Heart right ventricle (tissue), 16 donors: ENCODE measurements at regions of chr11 and their contacts with region 1.

Region 1: GRCh38 chr11:67507864-67508485 is at the start of gene CDK2AP2:
- DNase-seq: peak; percentile 100
- ATAC-seq: peak; percentile 76 to 90 (median 84)
- H3K4me3 ChIP-seq: peak within 1 kb of the TSS; percentile 50 to 97 (median 78)
- H3K27ac ChIP-seq: peak within 1 kb of the TSS; percentile 96 to 100 (median 98)
- H3K4me1 ChIP-seq: peaks cover 17 to 47% (median 41%) of the 10 kb centered on the region in 9 donors
- H3K27me3 ChIP-seq: peaks cover 0 to 7% (median 0%) of the 10 kb centered on the region in 7 donors
- CTCF ChIP-seq: no peak
- total RNA-seq, gene CDK2AP2: 29.3 to 94.1 (median 53.4) TPM

Region 2: DNA sequence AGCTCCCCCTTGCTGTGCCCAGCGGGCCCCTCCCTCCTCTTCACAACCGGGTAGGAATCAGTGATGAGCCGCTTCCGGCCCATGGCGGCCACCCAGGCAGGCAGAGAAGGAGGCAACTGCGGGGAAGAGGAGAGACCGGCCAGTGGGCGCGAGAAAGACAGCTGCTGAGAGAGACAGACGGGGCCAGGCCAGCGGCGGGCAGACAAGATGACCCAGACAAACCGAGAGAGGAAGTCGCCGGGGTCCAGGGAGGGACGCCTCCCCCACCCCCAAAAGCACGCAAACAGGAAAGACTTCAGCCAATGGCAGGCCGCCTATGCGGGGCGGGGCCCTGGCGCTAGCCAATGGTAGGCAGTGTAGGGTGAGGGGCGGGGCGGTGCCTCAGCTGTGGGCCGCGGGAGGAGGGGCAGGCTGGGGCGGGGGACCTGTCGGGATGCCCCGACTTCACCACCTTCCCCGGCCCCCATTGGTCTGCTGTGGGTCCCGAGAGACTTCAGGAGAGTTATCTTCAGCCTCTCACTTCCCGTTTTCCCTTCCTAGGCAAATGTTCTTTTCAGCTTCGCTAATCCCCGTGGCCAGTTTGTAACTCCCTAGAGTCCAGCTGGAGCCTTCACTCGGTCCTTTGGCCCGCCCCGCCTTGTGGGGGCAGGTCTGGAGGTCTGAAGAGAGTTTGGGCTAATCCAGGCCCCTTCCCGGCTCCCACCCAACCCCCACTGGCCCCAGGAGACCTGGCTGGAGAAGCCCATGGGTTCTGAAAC is 154.5 kb before region 1 on chr11 and contains the start of gene POLD4:
- intact Hi-C with region 1: loop called in 4 of 10 experiments (anchors 2 to 5 kb)
- DNase-seq: peak; percentile 98 to 99
- ATAC-seq: peak; percentile 88 to 96 (median 94)
- H3K4me3 ChIP-seq: peak within 1 kb of the TSS; percentile 62 to 97 (median 74)
- H3K27ac ChIP-seq: peak within 1 kb of the TSS; percentile 94 to 100 (median 99)
- H3K4me1 ChIP-seq: peaks cover 31 to 91% (median 66%) of the 10 kb centered on the region in 9 donors
- H3K27me3 ChIP-seq: no peaks in the 10 kb centered on the region
- CTCF ChIP-seq: no peak
- total RNA-seq, gene POLD4: 30.4 to 80.1 (median 39.6) TPM

Region 3: GRCh38 chr11:67401495-67402191 is 106.3 kb before region 1 on chr11 and contains the start of gene PPP1CA:
- intact Hi-C with region 1: loop called in 8 of 10 experiments (anchors 1 to 10 kb)
- DNase-seq: peak; percentile 90 to 94
- ATAC-seq: peak; percentile 76 to 95 (median 86)
- H3K4me3 ChIP-seq: peak within 1 kb of the TSS; percentile 68 to 99 (median 96)
- H3K27ac ChIP-seq: peak within 1 kb of the TSS; percentile 89 to 99 (median 97)
- H3K4me1 ChIP-seq: peaks cover 0 to 89% (median 54%) of the 10 kb centered on the region in 9 donors
- H3K27me3 ChIP-seq: no peaks in the 10 kb centered on the region
- CTCF ChIP-seq: peak; percentile 38 to 91 (median 62)
- total RNA-seq, gene PPP1CA: 92.0 to 143 (median 103) TPM

Region 4: GRCh38 chr11:67482825-67483798 is 24.9 kb before region 1 on chr11 and contains the start of gene AIP:
- intact Hi-C with region 1: loop called in 1 of 10 experiments (anchors 2 kb)
- DNase-seq: peak; percentile 97 to 98
- ATAC-seq: peak; percentile 98 to 99 (median 98)
- H3K4me3 ChIP-seq: peak within 1 kb of the TSS; percentile 29 to 66 (median 55)
- H3K27ac ChIP-seq: peak within 1 kb of the TSS; percentile 67 to 93 (median 84)
- H3K4me1 ChIP-seq: peaks cover 8 to 48% (median 23%) of the 10 kb centered on the region in 9 donors
- H3K27me3 ChIP-seq: peaks cover 0 to 6% (median 0%) of the 10 kb centered on the region in 7 donors
- CTCF ChIP-seq: peak in 5 of 9 donors; percentile 20 to 38 (median 33)
- total RNA-seq, gene AIP: 37.5 to 63.0 (median 49.8) TPM

Region 5: GRCh38 chr11:67583247-67584204 is 75.6 kb after region 1 on chr11 and contains the start of gene GSTP1:
- intact Hi-C with region 1: loop called in 2 of 10 experiments (anchors 5 to 10 kb)
- DNase-seq: peak; percentile 92 to 95
- ATAC-seq: peak; percentile 97 to 98 (median 97)
- H3K4me3 ChIP-seq: peak within 1 kb of the TSS; percentile 51 to 92 (median 80)
- H3K27ac ChIP-seq: peak within 1 kb of the TSS; percentile 82 to 100 (median 97)
- H3K4me1 ChIP-seq: peaks cover 0 to 50% (median 16%) of the 10 kb centered on the region in 9 donors
- H3K27me3 ChIP-seq: peaks cover 0 to 8% (median 0%) of the 10 kb centered on the region in 7 donors
- CTCF ChIP-seq: peak; percentile 64 to 93 (median 83)
- total RNA-seq, gene GSTP1: 249 to 430 (median 303) TPM